AG04449 (cell line): ENCODE measurements at regions of chr9 and their contacts with region 1.

Region 1: GRCh38 chr9:6827439-6827838 is 69.7 kb downstream of the KDM4C start:
- DNase-seq: no peak
- H3K4me3 ChIP-seq: no peak overlapping the region
- CTCF ChIP-seq: peak; percentile 35

Region 2: DNA sequence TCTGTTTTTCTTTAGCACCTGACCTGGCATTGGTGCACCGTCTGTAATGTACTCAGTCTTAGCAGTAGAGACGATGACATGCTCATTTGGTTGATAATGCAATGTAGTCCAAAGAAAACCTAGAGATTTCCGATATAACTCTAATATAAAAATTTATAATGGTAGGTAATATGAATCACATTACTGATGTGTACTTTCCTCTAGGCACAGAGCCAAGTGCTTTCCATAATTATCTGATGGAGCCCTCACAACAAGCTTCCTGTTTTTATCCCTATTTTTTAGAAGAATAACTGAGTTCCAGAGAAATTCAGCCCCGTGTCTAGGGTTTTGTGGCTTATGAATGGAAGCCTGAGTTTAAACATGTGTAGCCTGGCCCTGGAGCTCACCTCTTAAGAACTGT is 16.0 kb before region 1 on chr9:
- CTCF ChIA-PET with region 1: interaction called, 10 read pairs
- POLR2A ChIA-PET with region 1: no interaction called
- DNase-seq: no peak
- H3K4me3 ChIP-seq: no peak overlapping the region
- CTCF ChIP-seq: no peak

Region 3: GRCh38 chr9:6845880-6846279 is 18.4 kb after region 1 on chr9:
- CTCF ChIA-PET with region 1: interaction called, 20 read pairs
- POLR2A ChIA-PET with region 1: no interaction called
- DNase-seq: no peak
- H3K4me3 ChIP-seq: no peak overlapping the region
- CTCF ChIP-seq: peak; percentile 31

Region 4: GRCh38 chr9:6931913-6932312 is 104.5 kb after region 1 on chr9:
- CTCF ChIA-PET with region 1: no interaction called
- POLR2A ChIA-PET with region 1: no interaction called
- DNase-seq: no peak
- H3K4me3 ChIP-seq: no peak overlapping the region
- CTCF ChIP-seq: no peak